Activated T-helper 2 cell treated with anti-CD3 and anti-CD28 coated beads, Interferon-gamma antibody, Interleukin-2, Interleukin-4, amounts not matched to agents 10 μg/mL and 5 μg/mL and 100 μg/mL, durations not matched to agents 14 hours and 24 hours and 36 hours (primary cell): ENCODE measurements at regions of chr22 and their contacts with region 1.

Region 1: GRCh38 chr22:42214633-42215415 is 55.6 kb downstream of the TCF20 start:
- DNase-seq: no peak
- H3K4me3 Mint-ChIP-seq: no peak overlapping the region
- H3K27ac Mint-ChIP-seq: no peak overlapping the region
- H3K4me1 Mint-ChIP-seq: peaks cover 27% of the 10 kb centered on the region
- H3K27me3 Mint-ChIP-seq: no peaks in the 10 kb centered on the region

Region 2: DNA sequence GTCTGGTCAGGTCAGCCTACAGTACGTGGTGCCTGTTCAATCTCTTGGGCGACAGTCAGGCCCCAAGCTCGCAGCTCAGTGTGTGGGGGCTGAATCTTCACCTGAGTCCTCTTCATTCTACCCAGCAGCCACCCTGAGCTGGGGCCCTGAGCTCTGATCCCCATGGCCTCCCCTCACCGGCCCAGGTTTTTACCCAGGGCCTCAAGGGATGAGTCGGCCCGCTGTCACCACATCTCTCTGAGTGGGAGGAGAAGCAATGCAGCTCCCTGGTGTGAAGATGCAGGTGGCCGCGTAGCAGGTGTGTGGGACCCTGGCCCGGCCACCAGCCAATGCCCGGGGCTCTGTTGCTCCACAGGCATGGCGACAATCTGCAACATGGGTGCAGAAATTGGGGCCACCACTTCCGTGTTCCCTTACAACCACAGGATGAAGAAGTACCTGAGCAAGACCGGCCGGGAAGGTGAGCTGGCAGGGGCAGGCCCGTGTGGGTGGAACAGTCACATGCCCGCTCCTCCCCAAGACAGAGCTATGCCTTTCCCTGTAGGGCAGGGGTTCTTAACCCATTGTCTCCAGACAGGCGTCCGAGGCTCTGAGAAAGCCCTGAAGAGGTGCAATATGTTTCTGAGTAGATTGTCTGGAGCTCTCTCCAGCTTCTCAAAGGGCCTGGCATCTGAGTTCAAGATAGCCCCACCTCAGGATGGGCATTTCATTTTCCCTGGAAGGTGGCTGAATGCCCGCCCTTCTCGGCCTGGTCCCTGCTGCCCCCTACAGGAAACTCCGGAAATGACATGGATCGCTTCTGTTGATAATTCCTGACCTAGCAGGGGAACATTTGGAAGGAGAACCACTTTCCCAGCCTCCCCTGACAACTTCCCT is 697.4 kb before region 1 on chr22:
- intact Hi-C with region 1: no loop called
- DNase-seq: no peak
- H3K4me3 Mint-ChIP-seq: no peak overlapping the region
- H3K27ac Mint-ChIP-seq: no peak overlapping the region
- H3K4me1 Mint-ChIP-seq: no peaks in the 10 kb centered on the region
- H3K27me3 Mint-ChIP-seq: no peaks in the 10 kb centered on the region

Region 3: DNA sequence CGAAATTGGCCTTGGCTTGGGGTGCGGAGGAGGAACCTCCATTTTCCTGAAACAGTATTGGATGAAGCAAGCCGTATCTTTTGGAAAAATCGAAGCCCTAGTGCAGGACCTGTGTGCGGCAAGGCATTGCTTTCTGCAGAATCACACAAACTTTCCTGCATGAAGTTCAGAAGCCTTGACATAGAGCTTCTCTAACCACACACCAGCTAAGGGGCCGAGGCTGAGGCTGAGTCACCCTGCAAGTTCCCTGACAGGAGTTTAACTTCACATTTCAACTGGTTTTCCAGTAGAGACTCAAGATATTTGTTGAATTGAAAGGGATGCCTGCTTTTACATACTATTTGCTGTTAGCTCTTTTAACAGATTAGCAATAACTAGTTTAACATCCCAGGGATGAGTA is 12.2 kb before region 1 on chr22:
- intact Hi-C with region 1: loop called (anchors 2 kb)
- DNase-seq: peak; percentile 31
- H3K4me3 Mint-ChIP-seq: peak overlapping the region; percentile 71
- H3K27ac Mint-ChIP-seq: peak overlapping the region; percentile 74
- H3K4me1 Mint-ChIP-seq: peaks cover 43% of the 10 kb centered on the region
- H3K27me3 Mint-ChIP-seq: no peaks in the 10 kb centered on the region

Region 4: GRCh38 chr22:42270512-42271417 is 55.9 kb after region 1 on chr22 and contains the start of gene TCF20:
- intact Hi-C with region 1: loop called (anchors 5 kb)
- DNase-seq: peak; percentile 74
- H3K4me3 Mint-ChIP-seq: peak within 1 kb of the TSS; percentile 89
- H3K27ac Mint-ChIP-seq: peak within 1 kb of the TSS; percentile 76
- H3K4me1 Mint-ChIP-seq: peaks cover 17% of the 10 kb centered on the region
- H3K27me3 Mint-ChIP-seq: no peaks in the 10 kb centered on the region
- total RNA-seq, gene TCF20: 70.5 and 74.3 TPM in 2 replicates